Common myeloid progenitor, CD34-positive (primary cell): ENCODE measurements at regions of chr7 and their contacts with region 1.

Region 1: DNA sequence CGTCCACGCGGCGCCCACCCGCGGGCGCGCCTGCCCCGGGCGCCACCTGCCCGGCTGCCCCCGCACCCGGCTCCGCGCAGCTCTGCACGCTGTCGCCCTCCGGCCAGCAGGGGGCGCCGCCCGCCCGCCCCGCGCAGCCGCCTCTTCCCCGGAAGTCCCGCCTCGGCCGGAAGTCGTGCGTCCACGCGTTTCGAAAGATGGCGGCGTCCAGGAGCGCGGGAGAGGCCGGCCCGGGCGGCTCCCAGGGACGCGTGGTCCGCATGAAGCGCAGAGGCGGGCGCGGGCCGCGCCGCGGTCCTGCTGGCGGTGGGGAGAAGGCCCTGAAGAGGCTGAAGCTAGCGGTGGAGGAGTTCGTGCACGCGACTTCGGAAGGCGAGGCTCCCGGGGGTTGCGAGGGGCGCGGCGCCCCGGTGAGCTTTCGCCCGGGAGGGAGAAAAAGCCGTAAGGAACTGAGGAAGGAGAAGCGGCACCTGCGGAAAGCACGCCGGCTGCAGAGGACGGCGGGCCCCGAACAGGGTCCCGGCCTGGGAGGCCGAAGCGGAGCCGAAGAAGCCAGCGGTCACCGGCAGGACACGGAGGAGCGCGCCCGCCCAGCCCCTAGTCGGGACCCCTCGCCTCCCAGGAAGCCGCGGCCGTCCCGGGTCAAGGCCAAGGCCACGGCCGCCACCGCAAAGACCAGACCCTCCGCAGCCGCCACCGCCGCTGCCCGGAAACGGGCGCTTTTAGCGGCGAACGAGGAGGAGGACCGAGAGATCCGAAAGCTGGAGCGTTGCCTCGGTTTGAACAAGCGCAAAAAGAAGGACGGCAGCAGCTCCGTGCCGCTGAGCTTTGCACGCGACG is at the start of gene NOM1:
- DNase-seq: peak; percentile 83 to 90 (median 89)
- H3K4me3 ChIP-seq: peak within 1 kb of the TSS; percentile 84 to 93 (median 87)
- H3K27ac ChIP-seq: peak within 1 kb of the TSS in 1 of 2 experiments; percentile 61
- H3K4me1 ChIP-seq: peaks cover 12 to 20% (median 19%) of the 10 kb centered on the region in 4 experiments
- H3K27me3 ChIP-seq: peaks cover under 1 to 24% (median 5%) of the 10 kb centered on the region in 5 experiments

Region 2: GRCh38 chr7:156931957-156932381 is 17.8 kb before region 1 on chr7:
- CTCF ChIA-PET with region 1: interaction called, 15 read pairs
- POLR2A ChIA-PET with region 1: no interaction called
- DNase-seq: no peak
- H3K4me3 ChIP-seq: no peak overlapping the region
- H3K27ac ChIP-seq: no peak overlapping the region
- H3K4me1 ChIP-seq: peaks cover 0 to 8% (median 4%) of the 10 kb centered on the region in 4 experiments
- H3K27me3 ChIP-seq: peaks cover 0 to 56% (median 2%) of the 10 kb centered on the region in 5 experiments

Region 3: DNA sequence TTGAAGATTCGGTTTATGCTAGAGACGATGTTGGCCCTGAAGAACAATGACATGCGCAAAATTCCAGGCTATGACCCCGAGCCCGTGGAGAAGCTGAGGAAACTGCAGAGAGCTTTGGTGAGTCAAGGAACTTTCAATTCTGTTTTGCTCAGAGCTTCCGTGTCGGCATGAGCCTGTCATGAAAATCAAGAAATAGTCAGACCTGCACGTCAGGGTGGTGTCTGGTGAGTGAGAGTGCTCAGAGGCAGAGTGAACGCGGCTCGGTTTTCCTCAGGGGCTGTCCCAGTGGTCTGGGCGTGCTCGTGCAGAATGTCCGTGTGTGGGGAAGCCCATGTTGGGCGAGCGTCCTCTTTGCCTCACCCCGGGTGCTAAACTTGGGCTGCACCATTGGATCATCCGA is 12.4 kb after region 1 on chr7:
- CTCF ChIA-PET with region 1: interaction called, 10 read pairs
- POLR2A ChIA-PET with region 1: no interaction called
- DNase-seq: no peak
- H3K4me3 ChIP-seq: no peak overlapping the region
- H3K27ac ChIP-seq: no peak overlapping the region
- H3K4me1 ChIP-seq: no peaks in the 10 kb centered on the region
- H3K27me3 ChIP-seq: no peaks in the 10 kb centered on the region